MCF 10A (cell line): ENCODE measurements at regions of chr1 and their contacts with region 1.

Region 1: DNA sequence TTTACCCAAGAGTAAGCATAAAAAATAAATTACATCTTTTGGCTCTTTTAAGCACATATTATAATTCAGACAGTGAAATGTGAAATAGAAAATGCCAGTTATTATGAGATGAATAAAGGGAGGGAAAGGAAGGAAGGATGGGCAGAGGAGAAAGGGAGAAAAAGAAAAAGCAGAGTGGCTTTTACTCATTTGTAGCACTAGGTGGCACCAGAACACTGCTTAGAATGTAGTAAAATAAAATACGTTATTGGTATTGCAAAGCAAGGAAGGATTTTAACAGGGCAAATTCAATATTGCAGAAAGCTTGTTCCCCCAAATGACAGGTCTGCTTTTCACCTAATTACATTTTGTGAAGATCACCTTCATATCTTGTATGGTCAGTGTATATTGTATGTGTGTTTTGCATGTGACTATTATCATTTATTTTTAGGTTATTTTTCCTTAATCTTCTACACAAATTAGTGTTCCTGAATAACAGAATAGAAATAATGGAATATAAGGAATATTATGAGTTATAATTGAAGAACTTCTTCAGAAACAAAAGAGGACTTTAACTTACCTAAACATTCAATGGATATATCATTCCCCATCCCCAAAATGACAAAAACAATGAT is 9.1 kb upstream of the PCNX2 start:
- DNase-seq: peak; percentile 63
- H3K4me3 Mint-ChIP-seq: no peak overlapping the region
- H3K27ac Mint-ChIP-seq: no peak overlapping the region
- H3K4me1 Mint-ChIP-seq: no peaks in the 10 kb centered on the region
- H3K27me3 Mint-ChIP-seq: no peaks in the 10 kb centered on the region
- CTCF ChIP-seq: peak; percentile 98

Region 2: DNA sequence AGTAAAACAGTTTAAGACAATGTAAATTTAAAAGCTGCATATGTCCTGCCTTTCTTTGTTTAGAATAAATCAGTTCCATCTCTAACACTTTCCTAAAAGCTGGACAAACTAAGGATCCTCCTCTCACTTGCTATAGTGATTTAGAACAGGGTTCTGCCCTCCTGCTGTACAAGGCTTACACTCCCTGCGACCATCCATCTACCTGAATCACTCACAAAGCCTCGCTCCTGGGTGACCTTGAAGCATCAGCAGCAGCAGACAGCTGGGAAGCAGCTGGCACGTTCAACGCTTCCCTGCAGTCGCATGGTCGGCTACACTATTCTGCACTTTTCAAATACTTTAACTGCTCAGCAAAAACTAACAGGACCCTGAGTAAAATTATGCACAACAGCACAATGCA is 226.2 kb before region 1 on chr1:
- CTCF ChIA-PET with region 1: no interaction called
- POLR2A ChIA-PET with region 1: no interaction called
- intact Hi-C with region 1: no loop called
- DNase-seq: no peak
- H3K4me3 Mint-ChIP-seq: no peak overlapping the region
- H3K27ac Mint-ChIP-seq: no peak overlapping the region
- H3K4me1 Mint-ChIP-seq: peaks cover 7% of the 10 kb centered on the region
- H3K27me3 Mint-ChIP-seq: no peaks in the 10 kb centered on the region
- CTCF ChIP-seq: no peak

Region 3: DNA sequence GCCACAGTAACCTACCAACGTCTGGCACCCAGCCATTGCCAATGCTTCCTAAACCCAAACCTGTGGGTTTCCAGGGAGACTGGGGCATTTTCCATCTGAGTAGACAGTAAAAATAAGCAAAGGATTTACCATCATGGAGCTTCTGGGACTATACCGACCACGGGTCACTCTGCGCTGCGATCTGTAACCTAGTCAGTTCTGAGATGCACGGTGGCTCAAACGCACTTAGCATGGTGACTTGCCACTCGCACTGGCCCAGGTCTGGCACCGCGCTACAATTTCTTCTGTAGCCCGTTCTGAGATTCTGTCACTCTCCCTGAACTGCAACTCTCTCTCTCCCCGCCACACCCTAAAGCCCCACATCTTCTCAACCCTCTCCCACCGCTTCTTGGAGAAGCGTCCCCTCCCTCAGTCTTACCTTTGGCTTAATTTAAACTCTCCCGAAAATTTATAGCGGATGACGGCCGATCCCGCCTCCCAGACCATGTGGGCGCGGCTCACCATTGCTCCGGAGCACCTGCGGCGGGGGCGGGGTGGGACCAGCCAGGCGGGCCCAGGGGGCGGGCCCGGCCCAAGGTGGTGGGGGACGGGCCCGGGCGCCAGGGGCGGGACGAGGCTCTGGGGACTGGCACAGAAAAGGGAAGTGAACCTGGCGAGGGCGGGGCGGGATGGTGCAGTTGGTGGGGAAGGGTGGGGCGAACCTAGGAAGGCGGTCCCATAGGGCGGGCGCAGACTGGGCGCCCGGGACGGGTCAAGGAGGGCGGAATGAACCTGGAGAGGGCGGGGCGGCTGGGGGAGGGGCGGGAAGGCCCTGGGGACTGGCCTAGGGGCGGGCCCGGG is 22.4 kb after region 1 on chr1:
- CTCF ChIA-PET with region 1: interaction called, 36 read pairs
- POLR2A ChIA-PET with region 1: interaction called, 129 read pairs
- intact Hi-C with region 1: no loop called
- DNase-seq: peak; percentile 100
- H3K4me3 Mint-ChIP-seq: peak overlapping the region; percentile 87
- H3K27ac Mint-ChIP-seq: peak overlapping the region; percentile 58
- H3K4me1 Mint-ChIP-seq: peaks cover 39% of the 10 kb centered on the region
- H3K27me3 Mint-ChIP-seq: no peaks in the 10 kb centered on the region
- CTCF ChIP-seq: no peak

Region 4: DNA sequence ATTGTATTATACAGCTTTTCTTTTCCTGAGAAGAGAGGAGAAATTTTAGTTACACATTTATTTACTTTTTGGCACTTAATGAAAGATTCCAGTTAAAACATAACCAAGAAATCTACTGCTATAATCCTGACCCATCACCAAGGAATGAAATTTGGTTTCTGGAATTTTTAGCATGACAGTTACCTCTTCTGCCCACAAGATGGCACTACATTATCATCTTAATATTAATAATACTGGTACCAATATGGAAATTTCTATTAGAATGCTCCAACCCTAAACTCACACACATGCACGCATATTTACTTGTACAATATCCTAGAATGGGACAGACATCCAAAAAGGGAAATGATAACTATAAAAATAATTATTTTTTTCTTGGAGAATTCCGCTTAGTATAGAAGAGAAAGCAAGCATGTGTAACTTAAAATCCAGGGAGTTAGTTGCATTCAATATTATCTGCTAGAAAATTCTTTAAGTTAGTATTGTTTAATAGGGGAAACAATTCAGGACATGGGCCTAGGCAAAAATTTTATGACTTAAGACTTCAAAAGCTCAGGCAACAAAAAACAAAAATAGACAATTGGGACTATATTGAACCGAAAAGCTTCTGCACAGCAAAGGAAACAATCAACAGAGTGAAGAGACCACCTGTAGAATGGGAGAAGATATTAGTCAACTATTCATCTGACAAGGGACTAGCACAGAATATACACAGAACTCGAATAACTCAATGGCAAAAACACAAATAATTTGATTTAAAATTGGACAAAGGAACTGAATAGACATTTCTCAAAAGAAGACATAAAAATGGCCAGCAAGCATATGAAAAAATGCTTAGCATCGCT is 60.3 kb after region 1 on chr1:
- CTCF ChIA-PET with region 1: interaction called, 62 read pairs
- POLR2A ChIA-PET with region 1: interaction called, 4 read pairs
- intact Hi-C with region 1: loop called (anchors 1 kb)
- DNase-seq: peak; percentile 56
- H3K4me3 Mint-ChIP-seq: no peak overlapping the region
- H3K27ac Mint-ChIP-seq: peak overlapping the region; percentile 54
- H3K4me1 Mint-ChIP-seq: peaks cover 17% of the 10 kb centered on the region
- H3K27me3 Mint-ChIP-seq: no peaks in the 10 kb centered on the region
- CTCF ChIP-seq: peak; percentile 72

Region 5: DNA sequence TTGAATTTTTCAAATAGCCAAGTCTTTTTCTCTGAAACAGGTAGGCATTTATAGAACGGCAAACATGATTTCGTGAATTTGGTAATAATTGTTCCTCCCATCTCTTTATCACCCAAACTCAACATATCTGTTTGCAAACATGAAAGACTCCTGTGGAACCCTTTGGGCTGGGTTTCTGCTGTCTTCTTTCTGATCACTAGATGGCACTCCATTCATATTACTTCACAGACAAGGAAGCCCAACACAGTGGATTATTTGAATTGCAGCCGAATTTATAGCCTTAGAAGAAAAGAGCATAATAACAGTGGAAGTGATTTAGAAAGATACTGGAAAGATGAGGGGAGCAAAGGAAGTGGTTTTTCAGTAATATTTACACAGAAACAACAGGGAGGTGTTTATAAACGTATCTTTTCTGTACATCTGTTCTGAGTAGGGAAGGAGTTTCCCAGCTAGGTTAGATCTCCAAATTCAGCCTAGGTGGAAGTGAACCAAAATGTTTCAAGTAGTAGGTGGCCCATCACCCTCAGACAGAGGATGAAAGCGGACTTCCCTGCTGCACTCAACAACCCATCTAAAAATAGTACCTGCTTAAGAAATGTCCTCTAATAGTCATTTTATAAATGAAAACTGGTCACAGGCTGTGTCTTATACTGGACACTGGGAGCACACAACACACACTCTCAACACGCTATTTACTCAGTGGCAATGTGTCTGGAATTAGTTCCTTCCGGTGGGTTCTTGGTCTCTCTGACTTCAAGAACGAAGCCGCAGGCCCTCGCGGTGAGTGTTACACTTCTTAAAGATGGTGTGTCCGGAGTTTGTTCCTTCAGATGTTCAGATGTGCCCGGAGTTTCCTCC is 90.5 kb after region 1 on chr1:
- CTCF ChIA-PET with region 1: interaction called, 14 read pairs
- POLR2A ChIA-PET with region 1: interaction called, 3 read pairs
- intact Hi-C with region 1: loop called (anchors 1 kb)
- DNase-seq: peak; percentile 81
- H3K4me3 Mint-ChIP-seq: no peak overlapping the region
- H3K27ac Mint-ChIP-seq: no peak overlapping the region
- H3K4me1 Mint-ChIP-seq: no peaks in the 10 kb centered on the region
- H3K27me3 Mint-ChIP-seq: no peaks in the 10 kb centered on the region
- CTCF ChIP-seq: peak; percentile 98

Region 6: GRCh38 chr1:233452724-233453123 is 148.1 kb after region 1 on chr1:
- CTCF ChIA-PET with region 1: no interaction called
- POLR2A ChIA-PET with region 1: no interaction called
- intact Hi-C with region 1: no loop called
- DNase-seq: no peak
- H3K4me3 Mint-ChIP-seq: no peak overlapping the region
- H3K27ac Mint-ChIP-seq: no peak overlapping the region
- H3K4me1 Mint-ChIP-seq: no peaks in the 10 kb centered on the region
- H3K27me3 Mint-ChIP-seq: no peaks in the 10 kb centered on the region
- CTCF ChIP-seq: no peak

Region 7: GRCh38 chr1:234065794-234066447 is 761.3 kb after region 1 on chr1:
- CTCF ChIA-PET with region 1: interaction called, 32 read pairs
- POLR2A ChIA-PET with region 1: no interaction called
- intact Hi-C with region 1: loop called (anchors 1 kb)
- DNase-seq: peak; percentile 89
- H3K4me3 Mint-ChIP-seq: no peak overlapping the region
- H3K27ac Mint-ChIP-seq: no peak overlapping the region
- H3K4me1 Mint-ChIP-seq: peaks cover 5% of the 10 kb centered on the region
- H3K27me3 Mint-ChIP-seq: no peaks in the 10 kb centered on the region
- CTCF ChIP-seq: peak; percentile 98